ENCODE measurements at regions of chr14 and their contacts with region 1.

Region 1: GRCh38 chr14:92456215-92457015 is 57.2 kb upstream of the RIN3 start:
- DNase-seq: peak; percentile 63
- H3K4me3 Mint-ChIP-seq: no peak overlapping the region
- H3K27ac Mint-ChIP-seq: no peak overlapping the region
- H3K4me1 Mint-ChIP-seq: no peaks in the 10 kb centered on the region
- H3K27me3 Mint-ChIP-seq: no peaks in the 10 kb centered on the region
- CTCF ChIP-seq: peak; percentile 50

Region 2: DNA sequence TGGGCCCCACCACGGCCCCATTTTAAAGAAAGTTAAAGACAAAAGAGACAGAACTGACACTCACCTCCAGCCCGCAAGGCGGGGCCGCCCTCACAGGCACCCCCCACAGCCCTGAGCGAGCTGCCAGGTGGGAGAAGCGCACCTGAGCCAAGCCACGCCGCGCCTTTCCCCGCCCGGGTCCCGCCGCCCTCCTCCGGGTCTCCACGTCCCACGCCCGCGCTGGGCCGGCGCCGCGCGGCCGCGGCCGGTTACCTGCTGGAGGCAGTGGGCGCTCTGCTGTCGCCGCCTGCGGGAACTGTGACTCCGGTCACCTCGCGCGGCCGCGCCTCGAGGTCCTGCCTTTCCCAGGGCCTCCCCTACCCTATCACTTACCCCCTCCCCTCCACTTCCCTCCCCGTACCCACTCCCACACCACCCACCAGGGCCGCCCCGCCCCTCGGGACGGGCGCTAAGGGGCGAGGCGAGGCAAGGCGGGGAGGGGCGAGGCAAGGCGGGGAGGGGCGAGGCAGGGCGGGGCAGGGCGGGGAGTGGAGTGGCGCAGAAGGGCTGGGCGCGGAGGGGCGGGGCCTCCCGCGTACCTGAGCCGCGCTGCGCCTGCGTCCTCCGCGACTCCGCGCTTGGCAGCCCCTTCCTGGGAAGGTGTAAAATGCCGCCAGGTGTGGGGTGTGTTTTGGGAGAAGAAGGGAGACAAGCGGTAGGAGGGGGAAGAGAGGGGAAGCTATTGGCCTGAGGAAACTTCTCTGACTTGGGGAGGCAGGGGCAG is 620.1 kb before region 1 on chr14:
- CTCF ChIA-PET with region 1: no interaction called
- POLR2A ChIA-PET with region 1: no interaction called
- intact Hi-C with region 1: no loop called
- DNase-seq: peak; percentile 88
- H3K4me3 Mint-ChIP-seq: peak overlapping the region; percentile 81
- H3K27ac Mint-ChIP-seq: peak overlapping the region; percentile 71
- H3K4me1 Mint-ChIP-seq: peaks cover 15% of the 10 kb centered on the region
- H3K27me3 Mint-ChIP-seq: peaks cover 11% of the 10 kb centered on the region
- CTCF ChIP-seq: no peak

Region 3: DNA sequence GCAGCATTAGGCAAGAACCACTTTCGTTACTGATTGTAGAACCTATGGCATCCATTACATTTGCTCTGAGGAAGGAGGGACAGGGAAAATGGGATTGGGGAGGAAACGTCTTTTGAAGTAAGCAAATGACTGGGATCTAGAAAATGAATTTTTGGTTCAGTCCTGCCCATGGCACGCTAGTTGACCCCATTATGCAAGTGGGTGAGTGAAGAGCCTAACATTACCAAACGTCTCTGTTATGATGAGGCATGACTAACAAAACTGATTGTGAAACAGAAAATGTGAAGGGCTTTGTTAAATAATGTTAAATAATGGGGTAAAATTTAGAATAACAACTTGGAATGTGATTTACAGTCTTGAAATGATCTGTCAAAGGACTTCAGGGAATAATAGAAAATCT is 295.8 kb before region 1 on chr14:
- CTCF ChIA-PET with region 1: no interaction called
- POLR2A ChIA-PET with region 1: no interaction called
- intact Hi-C with region 1: loop called (anchors 5 kb)
- DNase-seq: peak; percentile 78
- H3K4me3 Mint-ChIP-seq: no peak overlapping the region
- H3K27ac Mint-ChIP-seq: no peak overlapping the region
- H3K4me1 Mint-ChIP-seq: no peaks in the 10 kb centered on the region
- H3K27me3 Mint-ChIP-seq: no peaks in the 10 kb centered on the region
- CTCF ChIP-seq: no peak

Region 4: DNA sequence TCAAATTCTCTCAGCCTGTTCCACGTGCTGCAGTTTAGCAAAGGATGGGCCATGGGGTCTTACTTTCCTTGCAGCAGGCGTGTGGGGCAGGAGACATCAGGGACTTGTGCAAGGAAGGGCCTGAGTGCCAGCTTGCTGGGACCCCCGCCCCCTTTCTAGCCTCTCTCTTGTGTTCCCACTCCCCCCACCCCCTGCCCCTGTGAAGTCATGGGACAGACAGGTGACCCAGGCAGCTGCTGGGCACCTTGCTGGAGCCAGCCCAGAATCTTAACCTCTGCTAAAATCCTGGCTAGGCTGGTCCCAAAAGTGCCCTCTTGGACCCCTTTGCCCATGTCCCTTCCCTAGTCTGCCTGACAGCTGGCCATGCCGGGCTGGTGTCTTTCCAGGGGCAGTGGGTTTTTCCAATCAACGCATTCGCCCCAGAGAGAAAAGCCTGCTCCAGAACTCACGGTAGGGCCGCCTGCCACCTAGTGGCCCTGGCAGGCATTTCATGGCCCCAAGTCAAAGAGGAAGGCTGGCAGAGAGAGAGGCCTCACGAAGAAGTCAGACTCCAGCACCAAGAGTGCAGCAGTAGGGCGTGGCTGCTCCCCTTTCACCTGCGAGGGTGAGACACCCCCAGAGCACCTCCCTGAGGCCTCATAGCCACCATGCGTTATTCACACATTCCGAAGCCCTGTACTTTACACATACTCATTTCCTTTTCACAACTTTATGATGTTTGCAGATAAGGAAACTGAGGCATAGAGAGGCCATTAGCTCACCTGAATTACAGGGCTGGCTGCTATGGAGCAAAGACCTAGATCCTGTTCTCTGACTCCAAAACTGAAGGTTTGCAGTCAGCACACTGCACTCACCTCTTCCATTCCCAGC is 224.6 kb after region 1 on chr14:
- CTCF ChIA-PET with region 1: interaction called, 4 read pairs
- POLR2A ChIA-PET with region 1: no interaction called
- intact Hi-C with region 1: loop called (anchors 5 kb)
- DNase-seq: peak; percentile 77
- H3K4me3 Mint-ChIP-seq: no peak overlapping the region
- H3K27ac Mint-ChIP-seq: no peak overlapping the region
- H3K4me1 Mint-ChIP-seq: peaks cover 5% of the 10 kb centered on the region
- H3K27me3 Mint-ChIP-seq: no peaks in the 10 kb centered on the region
- CTCF ChIP-seq: peak; percentile 95

Measured in MCF 10A (cell line).